PC-3 (cell line): ENCODE measurements at regions of chr11 and their contacts with region 1.

Region 1: GRCh38 chr11:46686886-46687795 is 13.3 kb downstream of the ARHGAP1 start:
- DNase-seq: no peak
- ATAC-seq: no peak
- H3K4me3 ChIP-seq: no peak overlapping the region
- H3K27ac ChIP-seq: no peak overlapping the region
- H3K4me1 ChIP-seq: no peaks in the 10 kb centered on the region
- H3K27me3 ChIP-seq: no peaks in the 10 kb centered on the region
- CTCF ChIP-seq: no peak

Region 2: DNA sequence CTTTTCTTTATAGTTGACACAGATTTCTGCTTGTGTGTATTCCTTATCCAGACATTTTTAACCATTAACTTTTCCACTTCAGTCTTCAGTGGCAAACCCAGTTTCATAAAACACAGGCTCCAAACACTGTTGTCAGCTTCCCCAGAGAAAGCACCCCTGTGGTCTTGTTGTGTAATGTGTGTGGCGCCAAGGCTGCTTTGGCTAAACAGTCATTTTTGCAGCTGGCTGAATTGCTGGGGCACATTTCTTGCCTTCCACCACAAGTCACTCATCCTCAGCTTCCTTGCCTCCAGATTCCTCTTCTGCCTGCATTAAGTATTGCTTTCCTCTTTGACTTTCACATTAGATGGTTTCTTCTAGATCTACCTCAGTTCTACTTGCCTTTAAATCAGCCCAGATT is 27.2 kb before region 1 on chr11:
- CTCF ChIA-PET with region 1: no interaction called
- POLR2A ChIA-PET with region 1: no interaction called
- intact Hi-C with region 1: no loop called
- DNase-seq: no peak
- ATAC-seq: no peak
- H3K4me3 ChIP-seq: no peak overlapping the region
- H3K27ac ChIP-seq: no peak overlapping the region
- H3K4me1 ChIP-seq: no peaks in the 10 kb centered on the region
- H3K27me3 ChIP-seq: no peaks in the 10 kb centered on the region
- CTCF ChIP-seq: no peak

Region 3: DNA sequence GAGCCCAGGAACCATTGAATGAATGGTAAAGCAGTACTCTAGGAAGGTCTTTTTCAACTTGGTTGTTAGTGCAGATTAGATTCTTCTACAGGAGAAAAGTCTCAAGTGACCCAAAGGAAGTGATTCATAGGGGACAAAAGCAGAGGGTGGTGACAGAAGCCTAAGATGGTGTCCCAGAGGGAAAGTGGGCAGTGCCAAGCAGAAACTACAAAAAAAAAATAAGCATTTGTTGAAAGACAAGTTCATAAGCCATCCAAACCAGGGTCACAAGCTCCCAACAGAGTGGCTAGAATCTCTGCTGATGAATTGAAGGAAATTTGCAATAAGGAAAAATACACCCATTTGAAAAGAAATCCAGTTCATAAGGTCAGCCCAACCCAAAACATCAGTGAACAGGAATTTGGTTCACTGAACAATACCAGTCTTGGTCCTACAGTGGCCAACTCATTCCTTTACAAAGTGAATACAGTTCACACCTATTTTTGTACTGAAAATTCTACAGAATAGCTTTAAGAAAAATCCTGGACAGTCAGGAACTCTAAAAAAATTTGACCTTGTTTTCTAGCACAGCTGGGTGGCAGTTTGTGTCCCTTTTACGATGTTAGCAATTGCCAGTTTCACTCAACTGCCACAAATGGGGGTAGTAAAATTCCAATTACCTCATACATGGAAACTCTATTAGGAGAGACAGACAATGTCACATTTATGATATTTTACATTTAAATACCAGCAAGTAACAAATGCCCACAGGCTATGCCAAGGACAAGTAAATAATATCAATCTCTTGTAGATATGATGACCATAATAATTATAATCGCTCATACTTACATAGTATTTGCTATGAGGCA is 1182.6 kb after region 1 on chr11:
- CTCF ChIA-PET with region 1: no interaction called
- POLR2A ChIA-PET with region 1: interaction called, 11 read pairs
- intact Hi-C with region 1: no loop called
- DNase-seq: peak; percentile 49
- ATAC-seq: peak; percentile 45
- H3K4me3 ChIP-seq: no peak overlapping the region
- H3K27ac ChIP-seq: no peak overlapping the region; the same call in 1 of the 2 replicates
- H3K4me1 ChIP-seq: peaks cover 12% of the 10 kb centered on the region
- H3K27me3 ChIP-seq: no peaks in the 10 kb centered on the region
- CTCF ChIP-seq: no peak